ENCODE measurements at regions of chr2 and their contacts with region 1.

Region 1: DNA sequence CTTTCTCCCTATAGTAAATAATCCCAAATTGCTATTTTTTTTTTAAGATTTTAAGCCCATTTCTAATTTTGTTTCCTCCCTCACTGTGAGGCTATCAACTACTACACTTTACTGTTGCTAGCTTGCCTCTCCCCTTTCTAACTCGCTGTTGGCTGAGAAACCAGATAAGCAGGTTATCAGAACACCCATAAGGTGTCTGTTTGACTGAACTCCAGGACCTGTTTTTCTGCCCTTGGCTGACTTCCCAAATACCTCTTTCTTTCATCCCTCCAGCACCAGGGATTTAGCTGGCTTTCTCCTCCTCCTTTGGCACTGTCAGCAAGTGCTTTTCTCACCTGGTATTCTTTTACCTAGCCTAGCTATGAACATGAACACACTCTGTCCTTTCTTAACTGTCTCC is 11.1 kb downstream of the TRAK2 start:
- DNase-seq: no peak
- ATAC-seq: no peak
- H3K4me3 ChIP-seq: no peak overlapping the region
- H3K4me3 Mint-ChIP-seq: no peak overlapping the region
- H3K27ac ChIP-seq: no peak overlapping the region
- H3K27ac Mint-ChIP-seq: no peak overlapping the region
- H3K4me1 ChIP-seq: no peaks in the 10 kb centered on the region
- H3K4me1 Mint-ChIP-seq: peaks cover 57% of the 10 kb centered on the region
- H3K27me3 ChIP-seq: no peaks in the 10 kb centered on the region
- H3K27me3 Mint-ChIP-seq: no peaks in the 10 kb centered on the region
- CTCF ChIP-seq: no peak

Region 2: GRCh38 chr2:201403880-201404279 is 36.3 kb before region 1 on chr2:
- CTCF ChIA-PET with region 1: no interaction called
- POLR2A ChIA-PET with region 1: interaction called, 3 read pairs
- intact Hi-C with region 1: loop called in 1 of 2 experiments (anchors 2 kb)
- DNase-seq: no peak
- ATAC-seq: no peak
- H3K4me3 ChIP-seq: no peak overlapping the region
- H3K4me3 Mint-ChIP-seq: no peak overlapping the region
- H3K27ac ChIP-seq: no peak overlapping the region
- H3K27ac Mint-ChIP-seq: no peak overlapping the region
- H3K4me1 ChIP-seq: no peaks in the 10 kb centered on the region
- H3K4me1 Mint-ChIP-seq: peaks cover 48% of the 10 kb centered on the region
- H3K27me3 ChIP-seq: no peaks in the 10 kb centered on the region
- H3K27me3 Mint-ChIP-seq: no peaks in the 10 kb centered on the region
- CTCF ChIP-seq: no peak

Region 3: DNA sequence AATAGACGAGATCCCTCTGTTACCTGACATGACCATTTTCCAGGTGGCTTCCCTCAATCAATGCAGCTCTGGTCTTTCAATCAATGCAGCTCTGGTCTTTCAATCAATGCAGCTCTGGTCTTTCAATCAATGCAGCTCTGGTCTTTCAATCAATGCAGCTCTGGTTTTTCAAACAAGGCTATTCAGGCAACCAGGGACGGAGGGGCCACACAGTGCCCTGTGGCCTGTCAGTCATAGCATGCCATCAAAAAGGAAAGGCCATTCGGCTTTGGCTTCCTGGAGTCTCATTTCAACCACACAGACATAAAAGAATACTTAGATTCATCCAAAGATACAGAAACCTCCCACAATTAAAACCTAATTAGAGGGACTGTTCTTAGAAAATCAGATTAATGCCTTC is 245.0 kb after region 1 on chr2:
- CTCF ChIA-PET with region 1: no interaction called
- POLR2A ChIA-PET with region 1: no interaction called
- intact Hi-C with region 1: no loop called
- DNase-seq: no peak
- ATAC-seq: no peak
- H3K4me3 ChIP-seq: no peak overlapping the region
- H3K4me3 Mint-ChIP-seq: no peak overlapping the region
- H3K27ac ChIP-seq: no peak overlapping the region
- H3K27ac Mint-ChIP-seq: no peak overlapping the region
- H3K4me1 ChIP-seq: no peaks in the 10 kb centered on the region
- H3K4me1 Mint-ChIP-seq: no peaks in the 10 kb centered on the region
- H3K27me3 ChIP-seq: no peaks in the 10 kb centered on the region
- H3K27me3 Mint-ChIP-seq: peaks cover 15% of the 10 kb centered on the region
- CTCF ChIP-seq: no peak

Measured in CD4-positive, alpha-beta T cell (primary cell).